Dorsolateral prefrontal cortex (tissue), 120 donors: ENCODE measurements at regions of chr3 and their contacts with region 1.

Region 1: DNA sequence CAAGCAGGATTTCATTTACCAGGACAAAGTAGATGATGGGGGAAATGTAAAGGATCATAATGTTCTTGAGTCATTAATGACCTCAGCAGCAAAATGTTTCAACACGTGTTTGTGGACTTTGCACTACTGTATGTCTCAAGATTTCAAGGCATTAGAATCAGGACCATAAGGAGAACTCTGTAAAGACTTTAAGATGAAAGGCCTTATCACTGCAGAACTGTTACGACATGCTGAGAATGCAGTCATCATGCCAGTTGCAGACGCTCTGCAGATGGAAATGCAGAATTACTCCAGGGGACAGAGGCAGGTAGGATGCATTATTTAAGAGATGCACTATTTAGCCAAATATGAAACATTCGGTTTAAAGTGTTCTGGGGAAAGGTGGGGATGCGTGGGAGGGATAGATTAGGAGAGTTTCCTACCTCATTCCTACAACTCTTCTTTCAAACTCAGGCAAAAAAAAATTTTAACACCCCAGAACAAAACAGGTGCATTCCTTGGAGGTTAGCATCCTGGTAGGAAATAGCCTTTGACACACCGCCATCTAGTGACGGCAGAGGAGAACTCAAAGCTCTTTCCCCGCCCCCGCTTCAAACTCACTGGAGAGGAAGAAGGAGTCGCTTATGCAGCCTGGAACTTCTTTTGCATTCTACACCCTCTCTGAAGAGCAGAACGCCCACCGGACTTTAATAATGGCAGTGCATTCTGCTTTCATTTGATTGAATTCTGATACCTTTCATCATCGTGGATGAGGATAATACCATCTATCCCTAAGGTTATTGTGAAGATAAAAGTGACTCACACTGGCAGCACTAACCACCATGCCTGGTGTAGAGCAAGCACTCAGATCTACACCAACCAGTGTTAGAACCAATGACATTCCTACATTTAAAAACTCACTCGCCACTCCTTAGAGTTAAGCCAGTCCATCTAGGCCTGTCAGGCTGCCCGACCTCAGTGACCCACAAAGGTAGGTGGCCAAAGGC is 43.1 kb upstream of the TOPAZ1 start:
- DNase-seq: peak; percentile 26 to 78 (median 72)
- H3K4me3 ChIP-seq: no peak overlapping the region
- H3K27ac ChIP-seq: no peak overlapping the region
- H3K27me3 ChIP-seq: peaks cover 0 to 5% (median 0%) of the 10 kb centered on the region in 45 donors
- CTCF ChIP-seq: peak; percentile 58 to 93 (median 85)

Region 2: GRCh38 chr3:43540624-43541023 is 658.0 kb before region 1 on chr3:
- intact Hi-C with region 1: loop called in 1 of 2 experiments (anchors 5 kb)
- DNase-seq: no peak
- H3K4me3 ChIP-seq: no peak overlapping the region
- H3K27ac ChIP-seq: no peak overlapping the region
- H3K27me3 ChIP-seq: no peaks in the 10 kb centered on the region
- CTCF ChIP-seq: no peak

Region 3: DNA sequence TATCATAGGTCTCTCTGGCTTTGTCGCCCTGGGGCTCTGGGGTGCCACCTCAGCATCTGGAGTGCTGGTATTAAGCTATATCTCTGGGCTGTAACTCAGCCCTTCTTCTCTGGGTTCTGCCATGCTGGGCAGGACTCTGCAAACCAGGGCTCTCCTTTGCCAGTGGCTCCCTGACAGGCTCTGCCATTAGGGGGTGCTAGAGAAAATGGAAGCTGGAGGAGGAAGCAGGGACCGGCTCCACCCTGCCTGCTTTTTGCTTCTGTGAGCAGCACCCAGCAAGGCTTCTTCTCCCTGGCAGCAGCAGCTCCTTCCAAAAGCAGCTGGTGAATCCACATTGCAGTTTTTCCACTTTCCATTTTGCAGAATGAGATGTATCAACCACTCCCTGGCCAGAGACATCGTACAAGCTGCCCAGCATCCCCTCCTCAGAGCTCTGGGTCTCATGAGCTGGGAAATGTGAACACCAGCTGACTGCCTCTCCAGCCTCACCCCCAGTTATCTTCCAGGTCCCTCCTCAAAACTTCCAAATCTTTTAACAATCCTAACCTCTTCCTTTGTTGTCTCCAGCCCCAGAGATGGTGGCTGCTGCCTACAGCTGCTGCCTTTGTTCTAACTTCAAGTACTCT is 342.8 kb before region 1 on chr3:
- intact Hi-C with region 1: loop called in 1 of 2 experiments (anchors 5 kb)
- DNase-seq: peak in 9 of 10 donors; percentile 31 to 76 (median 67)
- H3K4me3 ChIP-seq: peak overlapping the region in 1 of 59 donors; percentile 8
- H3K27ac ChIP-seq: peak overlapping the region in 16 of 59 donors; percentile 4 to 68 (median 40)
- H3K27me3 ChIP-seq: peaks cover 0 to 57% (median 7%) of the 10 kb centered on the region in 45 donors
- CTCF ChIP-seq: peak in 54 of 56 donors; percentile 34 to 71 (median 60)